ENCODE measurements at regions of chr5 and their contacts with region 1.

Region 1: GRCh38 chr5:6496207-6496584 is 47.5 kb downstream of the UBE2QL1 start:
- DNase-seq: peak; percentile 68
- H3K4me3 Mint-ChIP-seq: no peak overlapping the region
- H3K27ac Mint-ChIP-seq: peak overlapping the region; percentile 68
- H3K4me1 Mint-ChIP-seq: peaks cover 36% of the 10 kb centered on the region
- H3K27me3 Mint-ChIP-seq: peaks cover 10% of the 10 kb centered on the region

Region 2: GRCh38 chr5:6261668-6262067 is 234.5 kb before region 1 on chr5:
- intact Hi-C with region 1: loop called (anchors 2 kb)
- DNase-seq: peak; percentile 67
- H3K4me3 Mint-ChIP-seq: peak overlapping the region; percentile 56
- H3K27ac Mint-ChIP-seq: peak overlapping the region; percentile 92
- H3K4me1 Mint-ChIP-seq: peaks cover 21% of the 10 kb centered on the region
- H3K27me3 Mint-ChIP-seq: no peaks in the 10 kb centered on the region

Region 3: DNA sequence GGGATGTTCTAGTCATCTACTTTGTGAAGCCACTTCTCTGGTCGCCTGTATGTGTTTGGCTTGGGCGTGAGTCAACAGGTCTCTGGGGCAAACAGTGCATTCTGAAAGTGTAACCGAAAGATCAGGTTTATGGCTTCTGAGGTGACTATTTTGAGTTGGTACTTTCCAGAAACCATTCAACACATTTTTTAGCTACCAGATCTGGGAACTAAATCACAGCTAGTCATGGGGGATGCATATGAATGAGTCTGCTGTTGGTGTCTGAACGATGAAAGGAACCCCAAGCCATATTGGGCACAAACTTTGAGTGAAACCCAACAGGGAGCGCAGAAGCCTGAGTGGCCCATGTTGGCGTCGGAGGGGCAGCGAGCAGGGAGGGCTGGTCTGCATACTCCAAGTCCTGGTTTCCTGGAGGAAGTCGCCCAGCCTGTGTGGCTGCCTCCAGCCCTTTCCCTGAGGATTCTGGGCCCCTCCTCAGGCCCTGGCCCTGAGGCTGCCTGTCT is 12.3 kb before region 1 on chr5:
- intact Hi-C with region 1: loop called (anchors 1 kb)
- DNase-seq: peak; percentile 65
- H3K4me3 Mint-ChIP-seq: no peak overlapping the region
- H3K27ac Mint-ChIP-seq: no peak overlapping the region
- H3K4me1 Mint-ChIP-seq: peaks cover 15% of the 10 kb centered on the region
- H3K27me3 Mint-ChIP-seq: peaks cover 11% of the 10 kb centered on the region

Region 4: GRCh38 chr5:7501055-7501454 is 1004.9 kb after region 1 on chr5:
- intact Hi-C with region 1: no loop called
- DNase-seq: no peak
- H3K4me3 Mint-ChIP-seq: no peak overlapping the region
- H3K27ac Mint-ChIP-seq: no peak overlapping the region
- H3K4me1 Mint-ChIP-seq: no peaks in the 10 kb centered on the region
- H3K27me3 Mint-ChIP-seq: no peaks in the 10 kb centered on the region

Measured in activated CD4-positive, alpha-beta T cell treated with anti-CD3 and anti-CD28 coated beads, Interleukin-2, amount 10 ng/mL, durations not matched to agents 24 days and 14 days (primary cell).